HCT116 (cell line): ENCODE measurements at regions of chr7 and their contacts with region 1.

Region 1: GRCh38 chr7:36315309-36316133 is 74.1 kb upstream of the ANLN start:
- DNase-seq: no peak
- ATAC-seq: no peak; the same call in 1 of the 2 replicates
- H3K4me3 ChIP-seq: no peak overlapping the region
- H3K27ac ChIP-seq: no peak overlapping the region
- H3K4me1 ChIP-seq: peaks cover 2 to 8% of the 10 kb centered on the region in 2 experiments; a peak in 1 of 4 replicates
- H3K27me3 ChIP-seq: no peaks in the 10 kb centered on the region
- CTCF ChIP-seq: no peak
- POLR2A ChIP-seq: no peak
- RAD21 ChIP-seq: no peak

Region 2: GRCh38 chr7:36303202-36304098 is 12.1 kb before region 1 on chr7:
- CTCF ChIA-PET with region 1: interaction called, 15 read pairs
- POLR2A ChIA-PET with region 1: no interaction called
- RAD21 ChIA-PET with region 1: interaction called in 1 of 2 experiments, 3 read pairs
- intact Hi-C with region 1: no loop called
- DNase-seq: peak; percentile 83
- ATAC-seq: peak; percentile 87
- H3K4me3 ChIP-seq: peak overlapping the region in 1 of 2 experiments; percentile 8; a peak in 1 of 4 replicates
- H3K27ac ChIP-seq: peak overlapping the region; percentile 56
- H3K4me1 ChIP-seq: peaks cover 28 to 36% of the 10 kb centered on the region in 2 experiments
- H3K27me3 ChIP-seq: no peaks in the 10 kb centered on the region
- CTCF ChIP-seq: no peak
- POLR2A ChIP-seq: no peak
- RAD21 ChIP-seq: no peak